PC-9 (cell line): ENCODE measurements at regions of chr17 and their contacts with region 1.

Region 1: DNA sequence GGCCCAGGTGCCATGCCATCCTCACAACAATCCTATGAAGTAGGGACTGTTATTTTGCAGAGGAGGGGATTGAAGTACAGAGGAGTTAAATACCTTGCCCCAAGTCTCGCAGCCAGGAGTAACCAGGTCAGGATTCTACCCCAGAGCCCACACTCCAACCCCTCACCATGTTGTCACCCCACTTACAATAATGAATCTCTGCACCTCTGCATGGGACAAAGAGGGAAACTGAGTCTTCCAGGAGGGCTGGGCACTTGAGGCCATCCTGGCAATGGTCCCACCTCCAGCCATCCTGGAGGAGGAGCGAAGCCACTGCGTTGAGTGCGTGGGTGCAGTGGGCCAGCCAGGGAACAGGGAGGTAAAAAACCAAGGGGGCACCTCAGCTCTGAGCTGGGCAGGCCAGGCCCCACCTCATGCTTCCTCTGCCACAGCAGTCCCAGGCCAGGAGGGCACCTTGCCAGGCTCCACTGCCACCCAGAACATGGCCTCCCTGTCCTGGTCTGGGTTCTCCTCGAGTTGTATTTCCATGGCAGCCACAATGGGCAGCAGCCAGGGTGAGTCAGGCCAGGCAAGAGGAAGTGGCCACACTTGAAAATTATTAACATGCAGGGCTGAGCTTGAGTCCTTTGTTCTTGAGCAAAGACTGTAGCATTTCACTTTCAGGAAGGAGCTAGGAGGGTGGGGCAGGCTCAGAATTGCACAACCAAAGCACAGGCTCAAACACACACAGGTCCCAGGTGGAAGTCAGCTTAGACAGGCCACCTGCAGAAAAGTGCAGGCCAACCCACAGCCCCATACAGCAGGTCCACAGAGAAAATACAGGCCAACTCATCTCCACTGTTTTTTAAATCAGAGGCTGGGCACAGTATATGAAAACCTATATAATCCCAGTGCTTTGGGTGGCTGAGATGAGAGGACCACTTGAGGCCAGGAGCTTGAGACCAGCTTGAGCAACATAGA is 52.1 kb downstream of the CUEDC1 start:
- DNase-seq: peak; percentile 87 to 99
- H3K4me3 ChIP-seq: no peak overlapping the region
- H3K27ac ChIP-seq: peak overlapping the region; percentile 69
- H3K4me1 ChIP-seq: peaks cover 65% of the 10 kb centered on the region
- H3K27me3 ChIP-seq: no peaks in the 10 kb centered on the region
- CTCF ChIP-seq: no peak

Region 2: DNA sequence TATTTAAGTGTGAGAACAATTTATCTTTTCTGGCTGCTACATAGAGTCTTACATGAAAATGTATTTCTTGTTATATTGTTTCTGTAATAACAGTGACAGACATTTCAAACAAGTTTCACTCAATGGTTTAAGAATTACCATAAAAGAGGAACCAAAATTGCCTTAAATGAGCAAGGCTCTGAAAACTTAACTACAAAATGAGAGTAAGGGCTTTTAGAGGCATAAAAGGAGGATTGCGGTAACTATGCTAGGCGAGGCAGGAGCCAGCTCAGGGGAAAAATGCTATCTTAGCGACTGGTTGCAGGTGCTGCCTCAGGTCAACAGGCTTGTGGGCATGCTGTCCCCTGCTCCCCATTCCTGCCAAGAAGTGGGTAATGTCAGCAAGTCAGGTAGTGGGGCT is 728.5 kb before region 1 on chr17:
- CTCF ChIA-PET with region 1: no interaction called
- POLR2A ChIA-PET with region 1: no interaction called
- intact Hi-C with region 1: no loop called
- DNase-seq: no peak
- H3K4me3 ChIP-seq: no peak overlapping the region
- H3K27ac ChIP-seq: no peak overlapping the region
- H3K4me1 ChIP-seq: no peaks in the 10 kb centered on the region
- H3K27me3 ChIP-seq: peaks cover 46% of the 10 kb centered on the region
- CTCF ChIP-seq: no peak

Region 3: GRCh38 chr17:57861000-57861789 is 41.9 kb before region 1 on chr17:
- CTCF ChIA-PET with region 1: interaction called, 3 read pairs
- POLR2A ChIA-PET with region 1: interaction called, 4 read pairs
- intact Hi-C with region 1: loop called (anchors 5 kb)
- DNase-seq: peak; percentile 63 to 89
- H3K4me3 ChIP-seq: peak overlapping the region; percentile 52
- H3K27ac ChIP-seq: no peak overlapping the region
- H3K4me1 ChIP-seq: peaks cover 18% of the 10 kb centered on the region
- H3K27me3 ChIP-seq: no peaks in the 10 kb centered on the region
- CTCF ChIP-seq: no peak

Region 4: GRCh38 chr17:57892829-57893595 is 10.1 kb before region 1 on chr17:
- CTCF ChIA-PET with region 1: interaction called, 3 read pairs
- POLR2A ChIA-PET with region 1: interaction called, 4 read pairs
- intact Hi-C with region 1: loop called (anchors 1 kb)
- DNase-seq: peak; percentile 92 to 99
- H3K4me3 ChIP-seq: peak overlapping the region; percentile 41; the same call in 1 of the 2 replicates
- H3K27ac ChIP-seq: peak overlapping the region; percentile 90
- H3K4me1 ChIP-seq: peaks cover 38% of the 10 kb centered on the region
- H3K27me3 ChIP-seq: no peaks in the 10 kb centered on the region
- CTCF ChIP-seq: peak; percentile 58; the same call in 1 of the 2 replicates

Region 5: DNA sequence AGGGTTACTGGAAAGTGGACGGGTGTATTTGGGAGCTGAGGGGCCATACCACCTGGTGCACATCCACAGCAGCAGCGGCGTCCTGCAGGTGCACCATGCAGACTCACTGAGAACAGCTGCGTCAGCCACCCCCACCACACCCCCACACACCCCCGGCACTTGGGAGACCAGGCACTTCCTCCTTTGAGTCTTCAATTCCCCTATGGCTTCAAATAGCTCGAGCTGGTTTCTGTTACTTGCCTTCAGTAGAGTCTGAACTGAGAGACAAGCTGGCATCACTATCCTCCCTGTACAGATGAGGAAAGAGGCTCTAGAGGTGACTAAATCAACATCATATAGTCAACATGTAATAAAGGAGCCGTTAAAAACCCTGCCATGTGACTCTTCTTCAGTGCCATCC is 36.7 kb after region 1 on chr17:
- CTCF ChIA-PET with region 1: interaction called, 6 read pairs
- POLR2A ChIA-PET with region 1: interaction called, 15 read pairs
- intact Hi-C with region 1: loop called (anchors 1 kb)
- DNase-seq: no peak
- H3K4me3 ChIP-seq: no peak overlapping the region
- H3K27ac ChIP-seq: no peak overlapping the region
- H3K4me1 ChIP-seq: peaks cover 58% of the 10 kb centered on the region
- H3K27me3 ChIP-seq: no peaks in the 10 kb centered on the region
- CTCF ChIP-seq: no peak

Region 6: GRCh38 chr17:57975044-57975443 is 72.0 kb after region 1 on chr17:
- CTCF ChIA-PET with region 1: no interaction called
- POLR2A ChIA-PET with region 1: no interaction called
- intact Hi-C with region 1: no loop called
- DNase-seq: no peak
- H3K4me3 ChIP-seq: no peak overlapping the region
- H3K27ac ChIP-seq: no peak overlapping the region
- H3K4me1 ChIP-seq: no peaks in the 10 kb centered on the region
- H3K27me3 ChIP-seq: no peaks in the 10 kb centered on the region
- CTCF ChIP-seq: no peak

Region 7: GRCh38 chr17:58028578-58028977 is 125.5 kb after region 1 on chr17:
- CTCF ChIA-PET with region 1: no interaction called
- POLR2A ChIA-PET with region 1: interaction called, 10 read pairs
- intact Hi-C with region 1: no loop called
- DNase-seq: no peak
- H3K4me3 ChIP-seq: no peak overlapping the region
- H3K27ac ChIP-seq: no peak overlapping the region
- H3K4me1 ChIP-seq: peaks cover 16% of the 10 kb centered on the region
- H3K27me3 ChIP-seq: no peaks in the 10 kb centered on the region
- CTCF ChIP-seq: no peak